MCF 10A (cell line): ENCODE measurements at regions of chr6 and their contacts with region 1.

Region 1: DNA sequence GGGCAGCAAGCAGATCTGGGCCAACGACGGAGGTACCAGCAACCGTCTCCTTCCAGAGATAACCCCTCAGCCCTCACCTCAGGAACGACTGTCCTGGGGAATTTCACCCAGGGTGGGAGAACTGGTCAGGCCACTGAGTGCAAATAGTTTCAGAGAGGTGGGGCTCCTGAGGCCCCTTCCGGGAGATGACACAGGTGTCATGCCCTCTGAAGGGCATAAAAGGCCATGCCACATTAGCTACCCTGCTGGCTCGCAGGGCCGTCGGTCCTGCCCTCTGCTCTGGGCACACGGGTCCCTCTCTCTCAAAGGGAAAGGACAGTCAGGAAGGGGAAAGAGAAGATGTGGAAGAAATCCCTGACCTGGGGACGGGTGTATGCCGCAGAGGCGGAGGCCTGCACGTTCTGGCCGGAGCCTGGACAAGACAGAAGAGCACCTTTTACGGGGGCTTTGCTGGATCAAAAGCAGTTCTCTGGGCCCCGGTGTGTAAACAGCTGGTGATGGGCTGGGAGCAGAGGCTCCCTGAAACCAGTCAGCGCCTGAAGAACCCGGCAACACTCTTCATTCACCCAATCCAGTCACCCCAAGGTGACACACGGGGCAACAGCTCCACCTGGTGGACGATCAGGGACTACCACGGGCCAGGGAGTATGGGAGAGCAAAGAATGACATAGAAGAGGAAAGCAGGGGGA is 6.4 kb upstream of the TAF8 start:
- DNase-seq: peak; percentile 92
- H3K4me3 Mint-ChIP-seq: peak overlapping the region; percentile 91
- H3K27ac Mint-ChIP-seq: peak overlapping the region; percentile 60
- H3K4me1 Mint-ChIP-seq: peaks cover 39% of the 10 kb centered on the region
- H3K27me3 Mint-ChIP-seq: no peaks in the 10 kb centered on the region
- CTCF ChIP-seq: peak; percentile 93

Region 2: GRCh38 chr6:41735427-41736356 is 308.2 kb before region 1 on chr6 and contains the start of gene TFEB:
- CTCF ChIA-PET with region 1: no interaction called
- POLR2A ChIA-PET with region 1: interaction called, 34 read pairs
- intact Hi-C with region 1: loop called (anchors 2 kb)
- DNase-seq: peak; percentile 88
- H3K4me3 Mint-ChIP-seq: peak within 1 kb of the TSS; percentile 62
- H3K27ac Mint-ChIP-seq: no peak within 1 kb of the TSS
- H3K4me1 Mint-ChIP-seq: peaks cover 17% of the 10 kb centered on the region
- H3K27me3 Mint-ChIP-seq: no peaks in the 10 kb centered on the region
- CTCF ChIP-seq: peak; percentile 86
- total RNA-seq, gene TFEB: 11.8 and 16.2 TPM in 2 replicates

Region 3: GRCh38 chr6:41787219-41787917 is 256.6 kb before region 1 on chr6 and contains the start of gene TOMM6:
- CTCF ChIA-PET with region 1: interaction called, 29 read pairs
- POLR2A ChIA-PET with region 1: interaction called, 100 read pairs
- intact Hi-C with region 1: no loop called
- DNase-seq: peak; percentile 93
- H3K4me3 Mint-ChIP-seq: peak within 1 kb of the TSS; percentile 88
- H3K27ac Mint-ChIP-seq: peak within 1 kb of the TSS; percentile 96
- H3K4me1 Mint-ChIP-seq: peaks cover 13% of the 10 kb centered on the region
- H3K27me3 Mint-ChIP-seq: no peaks in the 10 kb centered on the region
- CTCF ChIP-seq: peak; percentile 89
- total RNA-seq, gene TOMM6: 202 and 227 TPM in 2 replicates

Region 4: GRCh38 chr6:41846666-41847237 is 197.2 kb before region 1 on chr6:
- CTCF ChIA-PET with region 1: interaction called, 26 read pairs
- POLR2A ChIA-PET with region 1: interaction called, 26 read pairs
- intact Hi-C with region 1: loop called (anchors 1 kb)
- DNase-seq: peak; percentile 97
- H3K4me3 Mint-ChIP-seq: no peak overlapping the region
- H3K27ac Mint-ChIP-seq: peak overlapping the region; percentile 49
- H3K4me1 Mint-ChIP-seq: peaks cover 12% of the 10 kb centered on the region
- H3K27me3 Mint-ChIP-seq: no peaks in the 10 kb centered on the region
- CTCF ChIP-seq: peak; percentile 79

Region 5: GRCh38 chr6:41936073-41936837 is 107.7 kb before region 1 on chr6:
- CTCF ChIA-PET with region 1: interaction called, 117 read pairs
- POLR2A ChIA-PET with region 1: interaction called, 136 read pairs
- intact Hi-C with region 1: loop called (anchors 1 kb)
- DNase-seq: peak; percentile 93
- H3K4me3 Mint-ChIP-seq: no peak overlapping the region
- H3K27ac Mint-ChIP-seq: peak overlapping the region; percentile 25
- H3K4me1 Mint-ChIP-seq: peaks cover 31% of the 10 kb centered on the region
- H3K27me3 Mint-ChIP-seq: no peaks in the 10 kb centered on the region
- CTCF ChIP-seq: peak; percentile 76

Region 6: GRCh38 chr6:42030585-42031506 is 13.1 kb before region 1 on chr6:
- CTCF ChIA-PET with region 1: interaction called, 27 read pairs
- POLR2A ChIA-PET with region 1: interaction called, 4 read pairs
- intact Hi-C with region 1: no loop called
- DNase-seq: no peak
- H3K4me3 Mint-ChIP-seq: no peak overlapping the region
- H3K27ac Mint-ChIP-seq: no peak overlapping the region
- H3K4me1 Mint-ChIP-seq: peaks cover 21% of the 10 kb centered on the region
- H3K27me3 Mint-ChIP-seq: no peaks in the 10 kb centered on the region
- CTCF ChIP-seq: no peak

Region 7: GRCh38 chr6:42104807-42105132 is 60.8 kb after region 1 on chr6:
- CTCF ChIA-PET with region 1: no interaction called
- POLR2A ChIA-PET with region 1: no interaction called
- intact Hi-C with region 1: no loop called
- DNase-seq: no peak
- H3K4me3 Mint-ChIP-seq: no peak overlapping the region
- H3K27ac Mint-ChIP-seq: no peak overlapping the region
- H3K4me1 Mint-ChIP-seq: peaks cover 13% of the 10 kb centered on the region
- H3K27me3 Mint-ChIP-seq: no peaks in the 10 kb centered on the region
- CTCF ChIP-seq: no peak

Region 8: GRCh38 chr6:42428326-42429041 is 384.6 kb after region 1 on chr6:
- CTCF ChIA-PET with region 1: no interaction called
- POLR2A ChIA-PET with region 1: no interaction called
- intact Hi-C with region 1: no loop called
- DNase-seq: no peak
- H3K4me3 Mint-ChIP-seq: no peak overlapping the region
- H3K27ac Mint-ChIP-seq: no peak overlapping the region
- H3K4me1 Mint-ChIP-seq: peaks cover 17% of the 10 kb centered on the region
- H3K27me3 Mint-ChIP-seq: no peaks in the 10 kb centered on the region
- CTCF ChIP-seq: no peak

Region 9: GRCh38 chr6:42563697-42564505 is 520.0 kb after region 1 on chr6 and contains the start of gene UBR2:
- CTCF ChIA-PET with region 1: interaction called, 3 read pairs
- POLR2A ChIA-PET with region 1: interaction called, 30 read pairs
- intact Hi-C with region 1: no loop called
- DNase-seq: peak; percentile 99
- H3K4me3 Mint-ChIP-seq: peak within 1 kb of the TSS; percentile 79
- H3K27ac Mint-ChIP-seq: peak within 1 kb of the TSS; percentile 81
- H3K4me1 Mint-ChIP-seq: peaks cover 18% of the 10 kb centered on the region
- H3K27me3 Mint-ChIP-seq: no peaks in the 10 kb centered on the region
- CTCF ChIP-seq: no peak
- total RNA-seq, gene UBR2: 20.1 and 23.2 TPM in 2 replicates